ENCODE measurements at regions of chr3 and their contacts with region 1.

Region 1: GRCh38 chr3:27134165-27134796 is 234.9 kb downstream of the NEK10 start:
- DNase-seq: peak; percentile 70
- H3K4me3 Mint-ChIP-seq: no peak overlapping the region
- H3K27ac Mint-ChIP-seq: no peak overlapping the region
- H3K4me1 Mint-ChIP-seq: no peaks in the 10 kb centered on the region
- H3K27me3 Mint-ChIP-seq: peaks cover 1% of the 10 kb centered on the region

Region 2: DNA sequence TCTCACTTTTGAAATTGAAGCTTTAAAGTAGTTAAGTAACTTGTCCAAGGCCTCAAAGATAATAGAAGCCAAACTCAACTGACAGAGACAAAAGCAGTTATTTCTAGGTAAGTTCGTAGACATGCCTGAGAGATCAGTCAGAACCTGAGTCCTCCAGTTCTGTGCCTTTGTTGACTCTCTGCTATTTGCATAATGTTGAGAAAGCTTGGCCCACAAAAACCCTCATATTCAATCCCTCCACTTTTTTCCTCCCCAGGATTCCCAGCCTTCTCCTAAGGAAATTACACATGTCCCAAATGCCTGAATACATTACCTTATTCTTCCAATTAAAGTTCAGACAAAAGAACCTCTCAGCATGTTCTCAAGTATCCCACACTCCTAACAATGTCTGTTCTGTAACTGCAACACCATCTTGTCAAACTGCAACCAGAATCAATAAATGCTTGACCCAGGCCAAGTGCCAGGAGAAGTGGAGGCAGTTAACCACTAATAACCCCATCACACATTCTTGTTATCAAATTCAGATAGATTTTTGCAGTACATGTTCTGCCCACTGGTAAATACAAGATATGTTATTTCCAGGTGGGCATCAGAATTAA is 293.9 kb before region 1 on chr3:
- CTCF ChIA-PET with region 1: no interaction called
- intact Hi-C with region 1: no loop called
- DNase-seq: no peak
- H3K4me3 Mint-ChIP-seq: no peak overlapping the region
- H3K27ac Mint-ChIP-seq: no peak overlapping the region
- H3K4me1 Mint-ChIP-seq: no peaks in the 10 kb centered on the region
- H3K27me3 Mint-ChIP-seq: no peaks in the 10 kb centered on the region

Region 3: GRCh38 chr3:27253831-27254230 is 119.5 kb after region 1 on chr3:
- CTCF ChIA-PET with region 1: interaction called, 25 read pairs
- intact Hi-C with region 1: loop called (anchors 1 kb)
- DNase-seq: peak; percentile 33
- H3K4me3 Mint-ChIP-seq: no peak overlapping the region
- H3K27ac Mint-ChIP-seq: no peak overlapping the region
- H3K4me1 Mint-ChIP-seq: no peaks in the 10 kb centered on the region
- H3K27me3 Mint-ChIP-seq: peaks cover 12% of the 10 kb centered on the region